ENCODE measurements at regions of chr2 and their contacts with region 1.

Region 1: GRCh38 chr2:64133828-64134227 is 10.4 kb downstream of the PELI1 start:
- DNase-seq: no peak
- ATAC-seq: no peak
- H3K4me3 ChIP-seq: no peak overlapping the region
- H3K27ac ChIP-seq: no peak overlapping the region
- H3K4me1 ChIP-seq: peaks cover 0 to 95% (median 50%) of the 10 kb centered on the region in 9 donors
- H3K27me3 ChIP-seq: no peaks in the 10 kb centered on the region
- CTCF ChIP-seq: no peak

Region 2: GRCh38 chr2:64086347-64087082 is 47.3 kb before region 1 on chr2:
- intact Hi-C with region 1: loop called in 1 of 10 experiments (anchors 10 kb)
- DNase-seq: no peak
- ATAC-seq: no peak
- H3K4me3 ChIP-seq: no peak overlapping the region
- H3K27ac ChIP-seq: no peak overlapping the region
- H3K4me1 ChIP-seq: no peaks in the 10 kb centered on the region
- H3K27me3 ChIP-seq: no peaks in the 10 kb centered on the region
- CTCF ChIP-seq: no peak

Region 3: DNA sequence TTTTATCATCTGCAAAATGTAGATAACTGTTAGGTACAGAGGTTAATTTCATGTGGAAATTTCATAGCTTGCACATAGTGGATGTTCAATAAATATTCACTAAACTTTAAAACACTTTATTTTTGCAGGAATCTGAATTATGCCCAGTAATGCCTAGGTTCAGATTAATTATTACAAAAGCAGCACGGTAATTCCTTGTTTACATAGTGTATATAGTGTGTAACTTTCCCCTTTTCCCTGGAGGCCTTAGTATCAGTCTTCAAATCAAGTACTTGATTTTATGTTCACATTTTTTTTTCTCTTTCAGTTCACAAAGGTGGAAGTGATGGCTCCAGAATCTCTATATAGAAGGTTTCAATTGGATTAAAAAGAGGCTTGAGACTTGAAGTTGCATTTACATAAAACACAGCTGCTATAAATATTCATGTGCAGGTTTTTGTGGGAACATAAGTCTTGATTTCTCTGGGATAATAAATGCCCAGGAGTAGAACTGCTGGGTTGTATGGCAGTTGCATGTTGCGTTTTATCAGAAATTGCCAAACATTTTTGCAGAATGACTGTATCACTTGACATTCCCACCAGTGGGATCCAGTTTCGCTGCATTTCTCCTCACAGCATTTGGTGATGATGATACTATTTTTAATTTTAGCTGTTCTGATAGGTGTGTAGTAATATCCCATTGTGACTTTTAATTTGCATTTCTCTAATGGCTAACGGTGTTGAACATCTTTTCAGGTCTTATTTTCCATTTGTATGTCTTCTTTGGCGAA is 292.5 kb after region 1 on chr2:
- intact Hi-C with region 1: no loop called
- DNase-seq: no peak
- ATAC-seq: no peak
- H3K4me3 ChIP-seq: no peak overlapping the region
- H3K27ac ChIP-seq: no peak overlapping the region
- H3K4me1 ChIP-seq: peaks cover 0 to 9% (median 0%) of the 10 kb centered on the region in 9 donors
- H3K27me3 ChIP-seq: no peaks in the 10 kb centered on the region
- CTCF ChIP-seq: no peak

Measured in heart right ventricle (tissue), 16 donors.